Astrocyte of the cerebellum (primary cell): ENCODE measurements at regions of chr9 and their contacts with region 1.

Region 1: DNA sequence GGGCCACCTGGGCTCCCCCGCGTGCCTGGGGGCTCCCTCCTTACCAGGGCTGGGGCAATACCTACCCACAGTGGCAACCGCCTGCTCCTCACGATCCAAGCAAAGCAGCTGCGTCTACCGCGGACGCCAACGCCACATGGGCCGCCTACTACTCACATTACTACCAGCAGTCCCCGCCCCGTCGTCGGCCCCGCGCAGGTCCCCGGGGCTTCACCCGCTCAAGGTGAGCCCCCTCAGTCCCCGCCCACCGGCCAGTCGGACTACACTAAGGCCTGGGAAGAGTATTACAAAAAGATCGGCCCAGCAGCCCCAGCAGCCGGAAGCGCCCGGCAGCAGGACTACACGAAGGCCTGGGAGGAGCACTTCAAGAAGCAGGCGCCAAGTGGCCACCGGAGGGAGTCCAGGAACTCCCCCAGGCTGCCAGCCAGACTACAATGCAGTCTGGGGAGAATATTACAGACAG is 106.0 kb upstream of the MTAP start:
- DNase-seq: no peak
- H3K4me3 ChIP-seq: no peak overlapping the region
- CTCF ChIP-seq: no peak

Region 2: DNA sequence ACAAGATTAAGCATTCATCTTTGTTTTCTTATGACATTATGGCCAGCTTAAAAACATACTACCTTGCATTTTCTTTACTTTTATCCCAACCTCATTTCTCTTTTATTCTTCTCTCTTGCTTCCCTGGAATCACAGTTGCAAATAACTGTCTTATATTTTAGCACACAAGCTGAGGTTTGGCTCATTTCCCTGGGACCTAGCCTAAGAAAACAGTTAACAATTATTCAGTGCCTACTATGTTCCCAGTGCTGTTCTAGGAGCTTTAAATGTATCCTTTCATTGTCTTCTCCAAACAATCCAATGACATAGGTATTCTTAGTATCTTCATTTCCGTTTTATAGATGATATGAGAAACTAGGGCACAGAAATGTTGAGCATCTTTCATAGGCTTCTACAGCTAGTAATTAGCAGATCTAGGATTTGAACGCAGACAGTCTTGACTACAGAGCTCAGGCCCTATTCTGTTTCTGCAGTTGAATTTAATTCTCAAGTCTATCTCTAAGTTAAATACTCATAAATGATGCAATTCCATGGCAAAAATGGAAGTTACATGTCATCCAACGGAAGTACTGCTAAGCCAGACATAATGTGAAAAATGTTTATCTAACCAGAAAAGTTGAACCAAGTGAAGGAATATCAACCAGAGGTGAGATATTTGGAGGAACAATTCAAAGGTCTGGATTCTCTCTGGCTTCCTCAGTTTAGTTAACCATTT is 53.7 kb after region 1 on chr9:
- in situ Hi-C with region 1: loop called (anchors 10 kb)
- DNase-seq: peak; percentile 49
- H3K4me3 ChIP-seq: no peak overlapping the region
- CTCF ChIP-seq: no peak

Region 3: GRCh38 chr9:21789541-21790037 is 93.1 kb after region 1 on chr9:
- in situ Hi-C with region 1: no loop called
- DNase-seq: peak; percentile 93
- H3K4me3 ChIP-seq: peak overlapping the region; percentile 21
- CTCF ChIP-seq: peak; percentile 75